ENCODE measurements at regions of chr6 and their contacts with region 1.

Region 1: DNA sequence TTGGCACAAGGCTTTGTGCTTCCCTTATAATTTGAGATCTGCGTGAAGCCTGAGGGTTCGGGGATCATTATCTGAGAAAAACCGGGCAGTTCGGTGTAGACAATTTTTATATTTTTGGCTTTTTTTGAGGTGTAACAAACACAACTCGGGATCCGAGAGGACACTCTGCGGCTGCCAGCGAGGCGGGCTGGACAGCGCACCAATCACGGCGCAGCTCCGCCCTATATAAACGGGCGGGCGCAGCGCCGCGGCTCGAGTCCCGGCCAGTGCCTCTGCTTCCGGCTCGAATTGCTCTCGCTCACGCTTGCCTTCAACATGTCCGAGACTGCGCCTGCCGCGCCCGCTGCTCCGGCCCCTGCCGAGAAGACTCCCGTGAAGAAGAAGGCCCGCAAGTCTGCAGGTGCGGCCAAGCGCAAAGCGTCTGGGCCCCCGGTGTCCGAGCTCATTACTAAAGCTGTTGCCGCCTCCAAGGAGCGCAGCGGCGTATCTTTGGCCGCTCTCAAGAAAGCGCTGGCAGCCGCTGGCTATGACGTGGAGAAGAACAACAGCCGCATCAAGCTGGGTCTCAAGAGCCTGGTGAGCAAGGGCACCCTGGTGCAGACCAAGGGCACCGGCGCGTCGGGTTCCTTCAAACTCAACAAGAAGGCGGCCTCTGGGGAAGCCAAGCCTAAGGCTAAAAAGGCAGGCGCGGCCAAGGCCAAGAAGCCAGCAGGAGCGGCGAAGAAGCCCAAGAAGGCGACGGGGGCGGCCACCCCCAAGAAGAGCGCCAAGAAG is 69.0 kb downstream of the HFE start:
- DNase-seq: peak; percentile 73 to 96 (median 88)
- ATAC-seq: peak; percentile 48 to 58
- H3K4me3 Mint-ChIP-seq: peak overlapping the region; percentile 89 to 99 (median 96)
- H3K27ac Mint-ChIP-seq: peak overlapping the region; percentile 92 to 100 (median 98)
- H3K4me1 Mint-ChIP-seq: peaks cover 24 to 44% (median 39%) of the 10 kb centered on the region in 4 donors
- H3K27me3 Mint-ChIP-seq: no peaks in the 10 kb centered on the region

Region 2: DNA sequence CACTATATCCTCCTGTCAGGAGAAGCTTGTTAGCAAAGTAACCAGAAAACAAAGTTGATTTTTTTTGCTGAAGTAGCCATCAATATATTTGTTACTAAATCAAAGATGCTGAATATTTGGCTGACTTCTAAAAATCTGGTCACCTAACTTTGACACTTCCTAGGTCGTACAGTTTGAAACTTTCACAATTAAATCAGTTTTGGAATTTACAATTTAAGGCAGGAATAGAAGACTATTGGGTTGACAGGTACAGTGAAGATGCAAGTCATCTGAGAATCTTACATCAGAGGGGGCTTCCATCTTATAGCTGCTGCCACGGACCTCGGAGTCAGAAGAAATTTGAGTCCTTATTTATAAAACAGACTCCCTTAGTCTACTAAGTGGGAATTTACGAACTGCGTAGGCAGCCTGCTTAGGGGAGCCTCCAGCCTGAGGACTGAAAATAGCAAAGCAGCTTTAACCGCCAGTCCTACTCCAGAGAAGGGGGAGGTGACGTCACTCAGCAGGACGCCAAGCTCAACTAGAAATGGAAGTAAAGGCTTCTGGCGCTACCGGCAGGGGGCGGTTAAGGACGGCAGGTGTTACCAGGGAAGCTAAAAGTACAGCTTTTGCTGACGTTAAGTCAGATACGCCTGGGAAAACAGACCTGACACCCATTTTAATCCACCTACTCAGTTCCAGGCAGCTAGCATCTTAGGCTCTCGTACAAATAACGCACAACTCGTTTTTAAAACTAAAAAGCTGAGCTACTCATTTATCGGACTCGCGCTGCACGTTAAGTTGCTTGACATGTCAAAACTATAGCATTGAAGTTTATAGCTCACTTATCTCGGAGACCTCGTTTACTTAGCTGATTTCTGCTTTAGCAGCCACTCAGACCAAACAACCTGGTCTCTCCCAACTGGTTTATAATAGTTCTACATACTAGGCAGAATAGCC is 130.1 kb before region 1 on chr6:
- POLR2A ChIA-PET with region 1: interaction called, 170 read pairs
- DNase-seq: peak; percentile 83 to 98 (median 94)
- ATAC-seq: peak; percentile 45 to 47
- H3K4me3 Mint-ChIP-seq: peak overlapping the region; percentile 84 to 99 (median 92)
- H3K27ac Mint-ChIP-seq: peak overlapping the region; percentile 96 to 100 (median 99)
- H3K4me1 Mint-ChIP-seq: peaks cover 19 to 47% (median 38%) of the 10 kb centered on the region in 4 donors
- H3K27me3 Mint-ChIP-seq: peaks cover 0 to 2% (median 0%) of the 10 kb centered on the region in 5 donors

Region 3: GRCh38 chr6:26103770-26104456 is 52.4 kb before region 1 on chr6:
- POLR2A ChIA-PET with region 1: interaction called, 140 read pairs
- DNase-seq: peak; percentile 71 to 97 (median 94)
- ATAC-seq: peak; percentile 91 to 92
- H3K4me3 Mint-ChIP-seq: peak overlapping the region; percentile 87 to 93 (median 89)
- H3K27ac Mint-ChIP-seq: peak overlapping the region; percentile 96 to 100 (median 98)
- H3K4me1 Mint-ChIP-seq: peaks cover 10 to 20% (median 14%) of the 10 kb centered on the region in 4 donors
- H3K27me3 Mint-ChIP-seq: peaks cover 0 to 4% (median 0%) of the 10 kb centered on the region in 5 donors

Region 4: DNA sequence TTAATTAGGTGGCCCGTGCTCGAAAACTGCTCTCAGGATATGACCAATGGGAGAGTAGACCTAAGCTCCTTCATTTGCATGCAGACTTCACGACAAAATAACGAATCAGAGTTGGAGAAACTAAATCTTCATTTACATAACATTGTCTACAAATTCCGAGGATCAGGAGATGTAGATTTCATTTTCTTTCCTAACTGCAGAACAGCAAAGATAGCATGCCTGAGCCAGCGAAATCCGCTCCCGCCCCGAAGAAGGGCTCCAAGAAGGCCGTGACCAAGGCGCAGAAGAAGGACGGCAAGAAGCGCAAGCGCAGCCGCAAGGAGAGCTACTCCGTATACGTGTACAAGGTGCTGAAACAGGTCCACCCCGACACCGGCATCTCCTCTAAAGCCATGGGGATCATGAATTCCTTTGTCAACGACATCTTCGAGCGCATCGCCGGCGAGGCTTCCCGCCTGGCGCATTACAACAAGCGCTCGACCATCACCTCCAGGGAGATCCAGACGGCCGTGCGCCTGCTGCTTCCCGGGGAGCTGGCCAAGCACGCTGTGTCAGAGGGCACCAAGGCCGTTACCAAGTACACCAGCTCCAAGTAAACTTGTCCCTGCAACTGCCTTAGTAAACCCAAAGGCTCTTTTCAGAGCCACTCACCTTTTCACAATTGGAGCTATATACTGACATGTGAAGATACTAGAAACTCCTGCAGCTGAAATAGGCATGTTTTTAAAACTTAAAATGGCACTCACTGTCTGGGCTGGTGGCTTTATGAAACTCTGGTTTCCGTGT is 27.5 kb after region 1 on chr6:
- POLR2A ChIA-PET with region 1: interaction called, 338 read pairs
- DNase-seq: peak; percentile 22 to 82 (median 58)
- ATAC-seq: peak; percentile 92 to 94
- H3K4me3 Mint-ChIP-seq: peak overlapping the region; percentile 93 to 100 (median 98)
- H3K27ac Mint-ChIP-seq: peak overlapping the region; percentile 70 to 98 (median 95)
- H3K4me1 Mint-ChIP-seq: peaks cover 27 to 48% (median 46%) of the 10 kb centered on the region in 4 donors
- H3K27me3 Mint-ChIP-seq: no peaks in the 10 kb centered on the region

Region 5: GRCh38 chr6:26234421-26235296 is 78.4 kb after region 1 on chr6:
- POLR2A ChIA-PET with region 1: interaction called, 167 read pairs
- DNase-seq: peak; percentile 41 to 91 (median 86)
- ATAC-seq: peak; percentile 69
- H3K4me3 Mint-ChIP-seq: peak overlapping the region; percentile 91 to 99 (median 95)
- H3K27ac Mint-ChIP-seq: peak overlapping the region; percentile 95 to 100 (median 97)
- H3K4me1 Mint-ChIP-seq: peaks cover 12 to 37% (median 32%) of the 10 kb centered on the region in 4 donors
- H3K27me3 Mint-ChIP-seq: no peaks in the 10 kb centered on the region

Region 6: DNA sequence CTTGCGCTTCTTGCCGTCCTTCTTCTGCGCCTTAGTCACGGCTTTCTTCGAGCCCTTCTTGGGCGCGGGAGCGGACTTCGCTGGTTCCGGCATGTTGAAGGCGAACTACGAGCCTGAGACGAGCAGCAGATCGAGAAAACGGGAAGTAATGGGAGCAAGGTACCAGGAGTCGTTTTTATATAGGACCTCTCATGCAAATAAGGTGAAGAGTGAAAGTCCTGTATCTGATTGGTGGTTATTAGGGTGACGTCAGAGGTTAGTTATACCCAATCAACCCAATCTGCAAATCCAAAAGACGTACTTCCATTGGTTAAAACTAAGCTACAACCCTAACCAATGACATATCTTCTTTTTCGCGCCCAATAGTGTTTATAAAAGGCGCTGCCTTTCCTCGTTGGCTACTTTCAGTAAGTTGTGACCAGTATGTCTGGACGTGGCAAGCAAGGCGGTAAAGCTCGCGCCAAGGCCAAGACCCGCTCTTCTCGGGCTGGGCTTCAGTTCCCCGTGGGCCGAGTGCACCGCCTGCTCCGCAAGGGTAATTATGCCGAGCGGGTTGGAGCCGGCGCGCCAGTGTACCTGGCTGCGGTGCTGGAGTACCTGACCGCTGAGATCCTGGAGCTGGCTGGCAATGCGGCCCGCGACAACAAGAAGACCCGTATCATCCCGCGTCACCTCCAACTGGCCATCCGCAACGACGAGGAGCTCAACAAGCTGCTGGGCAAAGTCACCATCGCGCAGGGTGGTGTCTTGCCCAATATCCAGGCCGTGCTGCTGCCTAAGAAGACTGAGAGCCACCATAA is 990.6 kb after region 1 on chr6:
- POLR2A ChIA-PET with region 1: interaction called, 58 read pairs
- DNase-seq: peak; percentile 37 to 94 (median 82)
- ATAC-seq: peak; percentile 85 to 88
- H3K4me3 Mint-ChIP-seq: no peak overlapping the region
- H3K27ac Mint-ChIP-seq: no peak overlapping the region
- H3K4me1 Mint-ChIP-seq: peaks cover 3 to 25% (median 12%) of the 10 kb centered on the region in 4 donors
- H3K27me3 Mint-ChIP-seq: no peaks in the 10 kb centered on the region

Region 7: GRCh38 chr6:27893059-27893835 is 1737.0 kb after region 1 on chr6:
- POLR2A ChIA-PET with region 1: interaction called, 29 read pairs
- DNase-seq: peak; percentile 69 to 96 (median 90)
- ATAC-seq: peak; percentile 72 to 78
- H3K4me3 Mint-ChIP-seq: no peak overlapping the region
- H3K27ac Mint-ChIP-seq: no peak overlapping the region
- H3K4me1 Mint-ChIP-seq: peaks cover 7 to 38% (median 28%) of the 10 kb centered on the region in 4 donors
- H3K27me3 Mint-ChIP-seq: no peaks in the 10 kb centered on the region